ENCODE measurements at regions of chr11 and their contacts with region 1.

Region 1: DNA sequence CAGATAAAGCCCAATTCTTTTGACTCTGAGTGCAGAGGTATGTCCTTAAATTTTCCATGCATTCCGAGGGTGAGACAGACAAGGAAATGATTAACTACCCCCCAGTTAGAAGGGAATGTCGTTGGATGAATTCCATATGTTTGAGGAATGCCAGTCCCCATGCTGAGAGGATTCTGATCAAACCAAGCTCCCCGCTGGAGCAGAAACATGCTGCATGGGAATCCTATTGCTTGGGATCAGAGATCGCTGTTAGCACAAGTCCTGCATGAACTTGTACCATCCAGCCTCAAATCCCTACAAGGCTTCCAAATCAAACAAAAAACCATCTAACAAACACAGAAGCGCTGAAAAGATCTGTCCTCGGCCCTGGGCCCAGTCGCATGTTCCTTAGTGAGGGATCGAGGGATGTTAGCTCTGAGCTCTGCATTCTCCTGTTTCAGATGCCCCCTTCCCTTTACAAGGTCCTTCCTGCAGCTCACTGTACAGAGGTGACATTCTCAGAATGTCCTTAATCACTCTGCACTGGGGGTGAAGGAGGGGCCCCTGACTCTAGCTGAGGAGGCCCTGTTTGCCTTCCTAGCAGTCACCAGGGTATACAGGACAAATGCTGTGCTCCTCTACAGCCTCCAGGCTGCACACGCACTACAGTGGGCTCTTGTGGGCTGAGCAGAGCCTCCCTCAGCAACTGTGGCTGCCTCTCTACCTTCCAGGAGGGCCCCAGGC is 353.4 kb downstream of the TENM4 start:
- DNase-seq: no peak
- H3K4me3 ChIP-seq: no peak overlapping the region
- CTCF ChIP-seq: no peak
- POLR2A ChIP-seq: no peak

Region 2: GRCh38 chr11:78659326-78660270 is 427.8 kb before region 1 on chr11:
- intact Hi-C with region 1: loop called (anchors 10 kb)
- DNase-seq: peak; percentile 18 to 83
- H3K4me3 ChIP-seq: no peak overlapping the region
- CTCF ChIP-seq: no peak
- POLR2A ChIP-seq: no peak

Region 3: GRCh38 chr11:79314906-79315681 is 227.7 kb after region 1 on chr11:
- intact Hi-C with region 1: no loop called
- DNase-seq: no peak
- H3K4me3 ChIP-seq: no peak overlapping the region
- CTCF ChIP-seq: no peak
- POLR2A ChIP-seq: no peak

Measured in lower leg skin (tissue), 4 donors.